Mammary epithelial cell (primary cell): ENCODE measurements at regions of chr4 and their contacts with region 1.

Region 1: DNA sequence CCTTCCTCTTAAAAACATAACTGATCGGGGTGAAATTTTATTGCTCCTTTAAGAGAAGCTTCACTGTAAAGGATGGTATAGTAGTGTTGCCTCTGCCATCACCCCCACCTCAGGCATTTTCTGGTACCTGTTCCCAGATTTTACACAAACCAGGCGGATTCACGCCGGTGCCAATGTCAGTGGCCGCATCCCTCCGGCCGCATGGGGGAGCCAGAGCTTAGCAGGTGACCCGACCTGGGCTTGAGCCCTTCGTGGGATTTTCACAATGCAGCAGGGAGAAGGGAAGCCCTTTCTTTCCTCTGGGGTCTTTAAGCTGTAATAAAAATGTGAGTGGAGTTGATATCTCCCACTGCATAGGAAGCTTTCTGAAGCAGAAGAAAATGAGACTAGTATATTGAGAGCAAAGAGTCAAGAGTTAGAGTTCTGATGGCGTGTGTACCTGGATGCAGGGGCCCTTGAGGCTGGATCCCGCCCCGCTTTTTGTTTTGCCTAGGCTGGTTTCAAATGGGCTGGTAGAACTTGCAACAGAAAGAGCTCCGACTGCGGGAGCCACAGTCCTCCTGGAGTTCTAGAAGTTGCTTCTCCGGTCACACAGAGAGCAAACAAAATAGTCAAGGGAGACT is 59.4 kb downstream of the POLR2B start:
- DNase-seq: peak; percentile 32
- H3K4me3 ChIP-seq: no peak overlapping the region
- H3K27ac ChIP-seq: no peak overlapping the region
- H3K4me1 ChIP-seq: peaks cover 9% of the 10 kb centered on the region
- H3K27me3 ChIP-seq: no peaks in the 10 kb centered on the region
- CTCF ChIP-seq: peak; percentile 89 to 98

Region 2: GRCh38 chr4:56674984-56675383 is 363.1 kb before region 1 on chr4:
- CTCF ChIA-PET with region 1: no interaction called
- dilution Hi-C with region 1: no loop called
- in situ Hi-C with region 1: no loop called
- intact Hi-C with region 1: no loop called
- DNase-seq: no peak
- H3K4me3 ChIP-seq: no peak overlapping the region
- H3K27ac ChIP-seq: no peak overlapping the region
- H3K4me1 ChIP-seq: no peaks in the 10 kb centered on the region
- H3K27me3 ChIP-seq: peaks cover 9% of the 10 kb centered on the region
- CTCF ChIP-seq: no peak

Region 3: DNA sequence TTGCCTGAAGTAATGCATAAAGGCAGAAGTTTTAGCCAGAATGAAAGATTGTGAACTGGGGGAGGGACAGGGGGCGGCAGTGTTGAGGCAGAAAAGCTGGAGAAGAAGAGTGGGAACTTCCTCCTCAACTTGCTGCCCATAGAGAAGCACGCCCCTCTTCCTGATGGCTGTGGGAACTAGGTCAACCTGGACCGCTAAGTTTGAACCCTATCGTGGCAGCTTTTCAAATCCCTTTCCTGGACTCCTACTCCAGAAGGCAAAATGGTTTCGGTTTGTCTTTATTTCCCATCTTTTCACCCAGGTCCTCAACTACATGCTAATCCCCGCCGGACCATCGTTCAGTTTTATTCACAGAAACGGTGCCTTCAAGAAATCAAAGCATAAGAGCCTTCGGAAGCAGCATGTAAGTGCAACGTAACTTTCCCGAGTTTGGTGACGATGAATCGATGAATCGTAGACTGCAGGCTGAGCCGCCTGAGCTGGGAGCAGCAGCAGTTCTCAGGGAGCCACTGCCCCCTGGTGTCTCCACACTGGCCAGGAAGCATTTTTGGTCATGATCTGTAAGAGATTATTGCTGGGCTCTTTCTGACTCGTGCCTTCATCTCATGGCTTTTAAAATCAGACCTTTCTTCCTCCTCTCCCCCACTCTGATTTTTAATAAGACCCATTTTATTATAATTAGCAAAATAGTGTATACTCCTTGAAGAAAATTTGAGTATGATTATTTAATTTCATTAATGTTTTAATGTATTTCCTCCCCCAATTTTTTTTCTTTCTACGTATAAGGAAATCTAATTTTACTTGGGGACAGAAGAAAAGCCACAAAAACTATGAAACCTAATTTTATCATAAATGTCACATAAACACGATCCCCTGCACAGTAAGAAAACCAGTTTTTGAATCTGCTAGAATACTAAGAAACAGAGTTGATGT is 238.0 kb before region 1 on chr4:
- CTCF ChIA-PET with region 1: no interaction called
- dilution Hi-C with region 1: no loop called
- in situ Hi-C with region 1: no loop called
- intact Hi-C with region 1: no loop called
- DNase-seq: peak; percentile 70
- H3K4me3 ChIP-seq: peak overlapping the region; percentile 65 to 75 (median 74)
- H3K27ac ChIP-seq: no peak overlapping the region
- H3K4me1 ChIP-seq: no peaks in the 10 kb centered on the region
- H3K27me3 ChIP-seq: no peaks in the 10 kb centered on the region
- CTCF ChIP-seq: peak; percentile 80 to 95

Region 4: DNA sequence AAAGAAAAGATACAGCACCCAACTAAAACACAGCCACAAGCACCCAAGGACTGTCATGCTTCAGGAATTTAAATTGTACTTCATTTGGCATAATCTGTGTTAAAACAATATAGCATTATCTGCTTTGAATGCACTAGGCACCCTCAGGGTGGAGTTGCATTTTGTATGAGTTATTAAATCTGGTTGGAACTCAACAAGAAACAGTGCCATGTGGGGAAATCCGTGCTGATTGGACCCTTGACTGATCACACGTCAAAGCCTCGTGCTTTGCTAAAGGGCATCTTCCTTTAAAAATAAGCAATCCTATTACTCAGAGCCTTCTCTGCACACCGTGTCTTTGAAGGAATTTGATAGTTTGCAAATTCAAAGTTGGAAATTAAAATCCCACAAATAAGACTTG is 36.7 kb after region 1 on chr4:
- CTCF ChIA-PET with region 1: interaction called, 12 read pairs
- dilution Hi-C with region 1: no loop called
- in situ Hi-C with region 1: no loop called
- intact Hi-C with region 1: loop called (anchors 2 kb)
- DNase-seq: peak; percentile 95
- H3K4me3 ChIP-seq: no peak overlapping the region
- H3K27ac ChIP-seq: peak overlapping the region; percentile 88
- H3K4me1 ChIP-seq: peaks cover 79% of the 10 kb centered on the region
- H3K27me3 ChIP-seq: no peaks in the 10 kb centered on the region
- CTCF ChIP-seq: peak in 1 of 2 donors; percentile 1

Region 5: DNA sequence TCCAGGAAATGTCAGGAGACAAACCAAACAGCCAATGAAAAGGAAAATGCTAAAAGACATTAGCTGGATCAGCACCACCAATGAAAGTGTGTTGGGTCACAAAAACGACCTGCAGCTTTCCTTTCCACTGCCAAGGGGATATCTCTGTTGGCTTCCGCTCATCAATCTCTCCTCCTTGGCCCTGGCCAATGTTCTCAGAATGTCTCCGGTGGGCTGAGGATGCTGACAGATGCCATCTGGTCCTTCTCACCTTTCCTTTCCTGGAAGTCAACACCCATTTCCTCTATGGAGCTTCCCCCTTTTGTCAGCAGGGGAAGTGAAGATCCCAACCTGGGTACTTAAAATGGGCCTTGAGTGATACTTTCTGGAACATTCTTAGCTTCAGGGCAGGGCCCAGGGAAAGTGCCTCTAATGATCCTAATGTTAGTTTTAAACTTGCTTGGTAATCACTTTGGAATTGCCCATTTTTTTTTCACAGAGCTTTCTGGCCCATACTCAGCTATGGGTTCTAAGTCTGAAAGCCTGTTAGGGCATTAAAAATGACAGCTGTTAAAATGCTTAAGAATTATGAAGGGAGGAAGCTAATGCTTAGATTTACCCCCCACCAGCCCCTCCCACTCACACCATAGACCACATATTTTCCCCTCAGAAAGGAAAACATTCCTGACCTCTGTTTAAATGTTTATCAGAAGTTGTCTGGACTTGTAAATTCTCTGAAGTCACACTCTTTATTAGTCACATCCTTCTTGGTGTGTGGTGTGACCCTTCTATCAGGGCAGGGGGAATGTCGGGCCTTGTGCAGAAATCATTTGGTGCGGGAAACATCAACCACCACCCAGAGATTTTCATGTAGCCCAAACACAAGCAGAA is 42.9 kb after region 1 on chr4:
- CTCF ChIA-PET with region 1: interaction called, 12 read pairs
- dilution Hi-C with region 1: no loop called
- in situ Hi-C with region 1: no loop called
- intact Hi-C with region 1: no loop called
- DNase-seq: peak; percentile 92
- H3K4me3 ChIP-seq: no peak overlapping the region
- H3K27ac ChIP-seq: peak overlapping the region; percentile 86
- H3K4me1 ChIP-seq: peaks cover 64% of the 10 kb centered on the region
- H3K27me3 ChIP-seq: no peaks in the 10 kb centered on the region
- CTCF ChIP-seq: no peak

Region 6: DNA sequence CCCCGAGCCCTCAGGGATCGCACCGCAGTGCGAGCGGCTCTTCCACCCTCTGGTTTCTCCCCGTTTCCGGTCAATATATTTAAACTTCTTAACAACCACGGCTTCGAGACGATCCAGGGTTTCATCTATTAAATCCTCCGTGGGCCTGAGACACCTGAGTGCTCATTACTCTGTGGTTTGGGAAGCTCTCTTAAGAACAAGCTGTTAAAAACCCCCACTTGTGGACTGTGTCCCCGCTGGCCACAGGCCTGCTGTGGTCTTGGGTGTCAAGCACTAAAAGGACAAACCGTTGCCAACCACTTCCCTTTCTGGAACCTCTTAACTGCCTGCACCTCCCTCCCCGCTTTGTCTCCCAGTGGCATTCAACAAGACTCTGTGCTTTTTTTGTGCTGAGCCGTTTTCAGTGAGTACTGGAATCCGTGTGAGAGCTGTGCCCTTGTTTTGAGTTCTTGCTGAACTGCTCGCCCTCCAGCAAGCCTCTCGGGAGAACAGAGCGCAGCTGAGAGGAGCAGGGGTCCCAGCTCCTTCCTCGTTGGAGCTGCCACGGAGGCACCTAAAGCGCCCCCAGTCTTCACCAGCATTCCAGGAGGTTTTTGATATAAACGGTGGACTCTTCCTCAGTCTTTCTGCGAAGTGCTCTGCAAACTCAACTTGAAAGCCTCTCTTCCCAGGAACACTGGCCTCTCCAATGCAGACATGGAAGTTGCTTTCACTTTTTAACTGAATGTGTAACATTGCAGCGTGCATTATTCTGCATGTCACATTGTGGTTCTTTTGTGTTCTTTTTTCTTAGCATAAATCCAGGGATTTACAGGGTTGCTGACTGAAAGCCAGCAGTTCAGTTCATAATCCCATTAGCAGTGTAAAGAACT is 72.8 kb after region 1 on chr4:
- CTCF ChIA-PET with region 1: no interaction called
- dilution Hi-C with region 1: no loop called
- in situ Hi-C with region 1: no loop called
- intact Hi-C with region 1: loop called (anchors 2 kb)
- DNase-seq: peak; percentile 64
- H3K4me3 ChIP-seq: peak overlapping the region in 2 of 3 experiments; percentile 74 to 83
- H3K27ac ChIP-seq: peak overlapping the region; percentile 22
- H3K4me1 ChIP-seq: peaks cover 32% of the 10 kb centered on the region
- H3K27me3 ChIP-seq: no peaks in the 10 kb centered on the region
- CTCF ChIP-seq: no peak

Region 7: DNA sequence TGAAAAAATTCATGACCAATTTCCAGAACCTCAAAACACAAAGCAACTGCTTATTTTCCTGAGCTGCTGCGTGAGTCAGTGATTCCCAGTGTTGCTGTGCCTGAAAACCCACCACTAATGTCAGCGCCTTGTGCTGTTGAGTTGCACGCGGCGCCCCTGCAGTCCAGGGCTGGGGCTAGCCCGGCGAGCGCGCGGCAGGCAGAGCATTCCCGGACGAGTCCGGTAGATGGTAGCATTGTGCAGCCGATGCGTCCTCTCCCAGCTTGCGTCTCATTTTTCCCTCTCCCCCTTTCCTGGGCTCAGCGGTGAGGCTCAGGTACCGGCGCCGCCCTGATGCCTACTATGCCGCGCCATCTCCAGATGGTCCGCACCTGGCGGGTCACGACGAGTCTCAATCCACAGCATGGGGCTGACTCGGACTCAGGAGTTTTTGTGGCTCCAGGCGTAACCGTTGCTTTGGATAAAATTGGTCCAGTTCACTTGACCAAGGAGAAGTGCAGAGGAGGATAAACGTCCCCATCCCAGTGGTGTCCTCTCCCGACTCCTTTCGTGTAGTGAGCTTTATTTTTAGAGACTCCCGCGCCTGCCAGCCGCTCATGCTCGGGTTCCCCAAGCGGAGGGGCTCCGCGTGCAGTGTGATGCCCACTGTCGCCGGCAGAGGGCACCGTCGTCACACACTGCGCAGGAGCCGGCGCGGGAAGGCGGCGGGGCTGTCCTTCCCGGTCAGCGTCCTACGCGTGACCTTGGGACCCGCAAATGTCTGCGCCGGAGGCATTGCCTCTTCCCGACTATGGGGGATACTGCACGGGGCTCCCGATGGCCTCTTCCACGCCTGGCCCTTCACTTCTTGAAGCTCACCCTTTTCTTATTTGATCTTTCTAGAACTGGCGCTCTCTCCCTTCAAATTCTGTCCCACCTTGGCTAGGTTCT is 125.7 kb after region 1 on chr4:
- CTCF ChIA-PET with region 1: interaction called, 4 read pairs
- dilution Hi-C with region 1: no loop called
- in situ Hi-C with region 1: loop called (anchors 10 kb)
- intact Hi-C with region 1: loop called (anchors 1 kb)
- DNase-seq: peak; percentile 74
- H3K4me3 ChIP-seq: peak overlapping the region; percentile 47 to 60 (median 50)
- H3K27ac ChIP-seq: peak overlapping the region; percentile 50
- H3K4me1 ChIP-seq: peaks cover 15% of the 10 kb centered on the region
- H3K27me3 ChIP-seq: no peaks in the 10 kb centered on the region
- CTCF ChIP-seq: peak; percentile 80 to 96

Region 8: DNA sequence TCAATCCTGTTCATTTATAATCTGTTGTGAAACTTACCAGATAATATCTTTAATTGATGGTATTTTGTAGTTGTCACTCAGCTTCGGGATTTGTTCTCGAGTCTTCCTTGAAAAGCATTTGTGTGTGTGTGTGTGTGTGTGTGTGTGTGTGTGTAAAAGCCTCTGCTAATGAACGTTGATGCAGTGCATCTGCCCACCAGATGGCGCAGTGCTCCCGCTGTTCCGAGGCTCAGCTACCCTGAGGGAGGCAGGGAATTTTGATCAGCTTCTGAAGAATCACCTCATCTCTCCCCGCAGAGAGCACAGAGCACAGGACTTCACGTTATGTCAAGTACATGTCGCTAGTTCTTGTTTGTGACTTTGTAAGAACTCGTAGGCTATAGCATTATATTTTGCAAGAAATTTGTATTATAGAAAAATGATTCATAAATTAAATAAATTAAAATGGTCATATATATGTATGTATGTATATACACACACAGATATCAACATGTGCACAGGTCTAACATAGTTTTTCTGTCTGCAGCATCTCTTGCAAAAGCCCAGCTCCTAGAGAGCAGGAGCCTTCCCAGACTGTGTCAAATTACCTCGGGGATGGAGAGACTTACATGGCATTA is 388.8 kb after region 1 on chr4:
- CTCF ChIA-PET with region 1: no interaction called
- dilution Hi-C with region 1: no loop called
- in situ Hi-C with region 1: loop called in 1 of 2 experiments (anchors 25 kb)
- intact Hi-C with region 1: loop called (anchors 1 kb)
- DNase-seq: peak; percentile 61
- H3K4me3 ChIP-seq: no peak overlapping the region
- H3K27ac ChIP-seq: no peak overlapping the region
- H3K4me1 ChIP-seq: peaks cover 30% of the 10 kb centered on the region
- H3K27me3 ChIP-seq: no peaks in the 10 kb centered on the region
- CTCF ChIP-seq: peak; percentile 66 to 85